Calu3 (cell line): ENCODE measurements at regions of chr5 and their contacts with region 1.

Region 1: DNA sequence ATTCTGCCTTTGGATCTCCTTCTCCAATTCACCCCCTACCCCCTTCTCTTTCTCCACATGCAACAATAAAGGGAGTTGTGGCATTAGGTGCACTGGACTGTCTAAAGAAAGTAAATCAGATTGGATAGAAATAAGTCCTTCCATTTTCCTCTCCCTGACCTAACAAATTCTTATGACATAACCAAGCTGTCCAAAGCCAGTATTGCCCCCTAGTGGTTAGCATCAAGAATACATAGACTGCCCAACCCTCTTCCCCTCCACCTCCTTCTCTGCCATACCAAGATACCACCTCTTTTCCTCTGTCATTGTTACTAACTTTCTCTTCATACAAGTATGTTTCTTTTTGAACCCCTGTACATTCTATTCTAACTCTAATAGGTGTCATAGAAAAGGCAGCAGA is 45.7 kb downstream of the PPARGC1B start:
- DNase-seq: peak; percentile 33
- H3K4me3 Mint-ChIP-seq: no peak overlapping the region
- H3K27ac Mint-ChIP-seq: no peak overlapping the region
- H3K4me1 Mint-ChIP-seq: peaks cover 52% of the 10 kb centered on the region
- H3K27me3 Mint-ChIP-seq: no peaks in the 10 kb centered on the region
- CTCF ChIP-seq: peak; percentile 65

Region 2: DNA sequence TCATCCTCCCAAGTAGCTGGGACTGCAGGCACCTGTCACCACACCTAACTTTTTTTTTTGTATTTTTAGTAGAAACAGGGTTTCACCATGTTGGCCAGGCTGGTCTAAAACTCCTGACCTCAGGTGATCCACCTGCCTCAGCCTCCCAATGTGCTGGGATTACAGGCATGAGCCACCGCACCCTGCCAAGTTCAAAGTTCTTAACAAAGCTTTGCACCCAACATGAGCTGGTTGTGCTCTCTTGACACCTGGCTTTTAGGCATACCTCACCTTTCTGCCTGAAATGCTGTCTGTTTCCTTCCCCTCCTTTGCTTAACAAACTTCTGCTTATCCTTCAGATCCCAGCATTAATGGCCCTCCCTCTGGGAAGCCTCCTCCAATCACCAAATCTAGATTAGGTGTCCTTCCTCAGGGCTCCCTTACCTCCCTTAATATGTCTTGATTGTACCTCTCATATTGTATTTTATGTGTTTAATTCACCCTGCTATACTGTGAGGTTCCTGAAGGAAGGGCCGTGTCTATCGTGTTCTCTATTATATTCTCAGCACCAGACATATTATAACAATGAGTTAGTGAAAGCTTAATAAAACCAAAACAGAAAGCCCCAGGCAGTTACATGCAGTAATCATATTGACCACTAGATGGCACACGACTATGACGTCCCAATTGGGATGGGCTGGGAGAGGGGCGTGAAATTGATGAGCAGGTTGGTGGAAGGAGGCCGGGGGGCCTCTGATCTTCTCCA is 108.5 kb before region 1 on chr5:
- CTCF ChIA-PET with region 1: interaction called, 8 read pairs
- intact Hi-C with region 1: loop called (anchors 2 kb)
- DNase-seq: peak; percentile 49
- H3K4me3 Mint-ChIP-seq: no peak overlapping the region
- H3K27ac Mint-ChIP-seq: no peak overlapping the region
- H3K4me1 Mint-ChIP-seq: peaks cover 8% of the 10 kb centered on the region
- H3K27me3 Mint-ChIP-seq: no peaks in the 10 kb centered on the region
- CTCF ChIP-seq: peak; percentile 84

Region 3: GRCh38 chr5:149747141-149747832 is 28.5 kb before region 1 on chr5:
- CTCF ChIA-PET with region 1: interaction called, 10 read pairs
- intact Hi-C with region 1: no loop called
- DNase-seq: peak; percentile 88
- H3K4me3 Mint-ChIP-seq: peak overlapping the region; percentile 24
- H3K27ac Mint-ChIP-seq: peak overlapping the region; percentile 50
- H3K4me1 Mint-ChIP-seq: peaks cover 56% of the 10 kb centered on the region
- H3K27me3 Mint-ChIP-seq: no peaks in the 10 kb centered on the region
- CTCF ChIP-seq: no peak